Endothelial cell of umbilical vein (primary cell): ENCODE measurements at regions of chr16 and their contacts with region 1.

Region 1: GRCh38 chr16:15548482-15548891 is 94.5 kb downstream of the MARF1 start:
- DNase-seq: no peak
- H3K4me3 ChIP-seq: no peak overlapping the region
- H3K27ac ChIP-seq: no peak overlapping the region
- H3K4me1 ChIP-seq: no peaks in the 10 kb centered on the region
- H3K27me3 ChIP-seq: no peaks in the 10 kb centered on the region
- CTCF ChIP-seq: no peak
- POLR2A ChIP-seq: no peak

Region 2: GRCh38 chr16:15518390-15519351 is 29.8 kb before region 1 on chr16:
- CTCF ChIA-PET with region 1: interaction called, 11 read pairs
- POLR2A ChIA-PET with region 1: no interaction called
- dilution Hi-C with region 1: no loop called
- intact Hi-C with region 1: no loop called
- DNase-seq: peak; percentile 85
- H3K4me3 ChIP-seq: no peak overlapping the region
- H3K27ac ChIP-seq: no peak overlapping the region
- H3K4me1 ChIP-seq: peaks cover 25% of the 10 kb centered on the region
- H3K27me3 ChIP-seq: no peaks in the 10 kb centered on the region
- CTCF ChIP-seq: no peak
- POLR2A ChIP-seq: no peak

Region 3: DNA sequence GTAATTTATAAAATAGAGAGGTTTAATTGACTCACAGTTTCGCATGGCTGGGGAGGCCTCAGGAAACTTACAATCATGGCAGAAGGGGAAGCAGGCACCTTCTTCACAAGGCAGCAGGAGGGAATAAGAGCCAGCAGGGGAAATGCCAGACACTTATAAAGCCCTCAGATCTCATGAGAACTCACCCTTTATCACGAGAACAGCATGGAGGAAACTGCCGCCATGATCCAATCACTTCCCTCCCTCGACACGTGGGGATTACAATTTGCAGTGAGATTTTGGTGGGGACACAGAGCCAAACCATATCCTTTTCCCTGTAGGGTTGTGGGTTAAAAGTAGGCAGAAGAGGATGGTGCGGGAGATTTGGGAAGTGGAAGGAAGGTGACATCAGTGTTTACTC is 12.7 kb before region 1 on chr16:
- CTCF ChIA-PET with region 1: interaction called, 13 read pairs
- POLR2A ChIA-PET with region 1: no interaction called
- dilution Hi-C with region 1: no loop called
- intact Hi-C with region 1: no loop called
- DNase-seq: no peak
- H3K4me3 ChIP-seq: no peak overlapping the region
- H3K27ac ChIP-seq: no peak overlapping the region
- H3K4me1 ChIP-seq: no peaks in the 10 kb centered on the region
- H3K27me3 ChIP-seq: no peaks in the 10 kb centered on the region
- CTCF ChIP-seq: no peak
- POLR2A ChIP-seq: no peak

Region 4: DNA sequence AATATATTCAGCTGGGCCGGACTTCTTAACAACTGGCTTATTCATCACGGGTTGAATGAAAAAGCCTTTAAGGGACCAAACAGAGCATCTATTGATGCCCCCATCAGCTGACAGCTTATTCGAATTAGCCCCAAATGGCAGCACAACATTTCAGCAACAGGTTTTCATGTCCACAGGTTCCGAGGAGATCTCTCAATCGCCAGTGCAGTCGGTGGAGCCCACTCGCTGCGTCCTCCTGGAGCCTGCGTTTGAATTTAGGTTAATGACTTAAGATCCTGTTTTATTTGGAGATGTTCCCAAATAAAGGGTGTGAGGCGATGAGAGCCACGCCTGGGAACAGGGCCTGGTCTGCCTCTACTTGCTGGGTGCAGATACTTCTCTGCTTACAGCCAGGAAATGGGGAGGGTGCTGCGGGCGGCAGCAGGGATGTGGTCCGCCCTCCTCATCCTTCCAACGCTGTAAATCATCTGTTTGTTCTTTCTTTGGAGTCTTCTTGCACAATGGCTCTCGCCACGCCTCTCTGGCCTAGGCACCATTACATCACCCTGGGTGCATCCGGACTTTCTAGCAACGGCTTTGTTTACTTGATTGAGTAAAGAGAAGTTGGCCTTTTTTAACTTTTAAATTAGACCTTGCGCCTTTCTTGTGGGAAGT is 124.2 kb after region 1 on chr16:
- CTCF ChIA-PET with region 1: no interaction called
- POLR2A ChIA-PET with region 1: no interaction called
- dilution Hi-C with region 1: no loop called
- intact Hi-C with region 1: no loop called
- DNase-seq: peak; percentile 99
- H3K4me3 ChIP-seq: peak overlapping the region in 1 of 3 experiments; percentile 26
- H3K27ac ChIP-seq: peak overlapping the region; percentile 99
- H3K4me1 ChIP-seq: peaks cover 21% of the 10 kb centered on the region
- H3K27me3 ChIP-seq: no peaks in the 10 kb centered on the region
- CTCF ChIP-seq: no peak
- POLR2A ChIP-seq: peak; percentile 77